Mucosa of descending colon (tissue), 3 donors: ENCODE measurements at regions of chr1 and their contacts with region 1.

Region 1: GRCh38 chr1:108512239-108512981 is 47.5 kb upstream of the EEIG2 start:
- DNase-seq: peak in 1 of 3 donors; percentile 23
- ATAC-seq: peak; percentile 51
- H3K4me3 ChIP-seq: no peak overlapping the region
- H3K4me1 ChIP-seq: no peaks in the 10 kb centered on the region
- CTCF ChIP-seq: peak; percentile 49

Region 2: GRCh38 chr1:108559215-108560186 is 47.1 kb after region 1 on chr1 and contains the start of gene EEIG2:
- intact Hi-C with region 1: loop called in 1 of 2 experiments (anchors 2 kb)
- DNase-seq: peak; percentile 92 to 97 (median 93)
- ATAC-seq: peak; percentile 96
- H3K4me3 ChIP-seq: peak within 1 kb of the TSS; percentile 58
- H3K4me1 ChIP-seq: peaks cover 18% of the 10 kb centered on the region
- CTCF ChIP-seq: peak; percentile 90
- total RNA-seq, gene EEIG2: 21.4 to 32.7 (median 29.5) TPM

Region 3: DNA sequence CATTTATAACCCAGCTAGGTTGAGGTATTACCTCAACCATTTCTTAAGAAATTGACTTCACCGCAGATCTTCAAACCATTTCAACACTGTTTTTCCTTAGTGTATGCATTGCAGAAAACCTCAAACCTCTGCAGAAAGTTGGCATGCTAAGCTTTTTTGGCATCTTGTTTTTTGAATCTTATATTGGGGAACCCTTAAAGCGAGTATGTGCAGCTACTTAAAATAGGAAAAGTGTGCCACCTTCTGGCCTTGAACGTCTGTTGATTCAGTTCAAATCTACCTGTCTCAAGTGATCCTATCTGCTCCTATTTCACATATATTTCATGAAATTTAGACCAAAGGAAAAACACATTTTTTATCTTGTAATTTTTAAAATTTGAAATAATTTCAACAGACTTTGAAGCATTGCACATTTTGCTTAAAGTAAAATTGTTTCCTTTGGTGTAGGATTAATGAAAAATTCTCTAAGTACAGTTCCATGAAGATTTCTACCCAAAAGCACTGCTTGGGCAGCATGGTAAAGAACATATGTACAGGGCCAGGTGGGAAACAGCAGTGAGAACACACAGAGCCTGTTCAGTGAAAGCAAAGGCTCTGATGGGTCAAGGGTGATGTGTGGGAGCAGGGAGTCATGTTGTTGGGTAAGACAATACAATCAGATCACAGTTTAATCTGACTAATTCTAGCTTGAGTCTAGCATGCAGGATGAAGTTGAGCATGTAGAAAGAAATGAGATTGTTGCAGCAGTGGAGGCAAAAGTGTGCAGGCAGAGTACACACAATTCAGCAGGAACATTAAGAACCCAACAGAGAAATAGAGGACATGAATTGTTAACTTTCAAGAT is 131.3 kb after region 1 on chr1:
- intact Hi-C with region 1: loop called (anchors 5 kb)
- DNase-seq: peak in 1 of 3 donors; percentile 85
- ATAC-seq: no peak
- H3K4me3 ChIP-seq: no peak overlapping the region
- H3K4me1 ChIP-seq: peaks cover 18% of the 10 kb centered on the region
- CTCF ChIP-seq: no peak